ENCODE measurements at regions of chr13 and their contacts with region 1.

Region 1: GRCh38 chr13:99935777-99936176 is 35.8 kb downstream of the ZIC5 start:
- DNase-seq: peak in 1 of 2 experiments; percentile 60
- H3K4me3 ChIP-seq: no peak overlapping the region
- H3K27ac ChIP-seq: no peak overlapping the region
- H3K4me1 ChIP-seq: peaks cover 0 to 4% (median 2%) of the 10 kb centered on the region in 4 experiments; a peak in 3 of 7 replicates
- H3K27me3 ChIP-seq: no peaks in the 10 kb centered on the region
- CTCF ChIP-seq: peak; percentile 34 to 71 (median 52); a peak in 3 of 4 replicates
- EP300 ChIP-seq: no peak
- POLR2A ChIP-seq: no peak
- RAD21 ChIP-seq: peak; percentile 21 to 49; a peak in 2 of 4 replicates

Region 2: GRCh38 chr13:99830931-99831330 is 104.8 kb before region 1 on chr13:
- CTCF ChIA-PET with region 1: no interaction called
- POLR2A ChIA-PET with region 1: no interaction called
- DNase-seq: peak in 1 of 2 experiments; percentile 25
- H3K4me3 ChIP-seq: no peak overlapping the region
- H3K27ac ChIP-seq: no peak overlapping the region
- H3K4me1 ChIP-seq: peaks cover 0 to 4% (median 0%) of the 10 kb centered on the region in 4 experiments; a peak in 3 of 7 replicates
- H3K27me3 ChIP-seq: no peaks in the 10 kb centered on the region
- CTCF ChIP-seq: peak; percentile 49 to 86 (median 68)
- EP300 ChIP-seq: no peak
- POLR2A ChIP-seq: no peak
- RAD21 ChIP-seq: peak; percentile 59 to 72

Region 3: DNA sequence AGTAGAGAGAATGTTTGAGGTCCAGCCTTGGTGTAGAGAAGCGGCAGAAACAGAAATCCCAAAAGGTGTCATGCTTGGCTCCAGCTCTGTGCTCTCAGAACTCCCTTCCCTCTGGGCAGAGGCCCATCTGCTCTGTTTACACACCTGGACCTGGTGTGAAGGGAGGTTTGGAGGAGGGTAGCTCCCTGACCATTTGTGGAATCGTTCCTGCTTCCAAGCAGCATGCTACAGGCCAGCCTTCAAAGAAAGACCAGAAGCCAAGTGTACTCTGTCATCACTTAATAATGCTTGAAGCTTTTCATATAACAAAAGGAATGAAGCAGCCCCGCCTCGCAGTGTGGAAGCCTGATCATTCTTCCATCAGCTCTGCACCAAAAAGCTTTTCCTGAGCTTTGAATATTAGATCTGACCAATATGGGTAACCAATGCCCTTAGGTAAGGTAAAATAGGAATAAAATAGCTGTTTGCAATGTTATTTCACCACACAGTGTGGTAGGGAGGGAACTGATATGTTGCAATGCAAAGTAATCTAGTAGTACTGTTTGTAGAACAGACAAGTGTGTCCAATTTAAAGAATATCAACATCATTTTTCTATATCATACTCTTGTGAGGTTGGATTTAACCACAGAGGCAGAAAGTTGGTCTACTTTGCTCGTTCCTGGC is 27.5 kb before region 1 on chr13:
- CTCF ChIA-PET with region 1: interaction called, 12 read pairs
- POLR2A ChIA-PET with region 1: no interaction called
- DNase-seq: no peak
- H3K4me3 ChIP-seq: no peak overlapping the region
- H3K27ac ChIP-seq: no peak overlapping the region
- H3K4me1 ChIP-seq: peaks cover 1 to 9% (median 3%) of the 10 kb centered on the region in 4 experiments; a peak in 4 of 7 replicates
- H3K27me3 ChIP-seq: no peaks in the 10 kb centered on the region; a peak in 1 of 7 replicates
- CTCF ChIP-seq: no peak
- EP300 ChIP-seq: no peak
- POLR2A ChIP-seq: no peak
- RAD21 ChIP-seq: no peak

Region 4: DNA sequence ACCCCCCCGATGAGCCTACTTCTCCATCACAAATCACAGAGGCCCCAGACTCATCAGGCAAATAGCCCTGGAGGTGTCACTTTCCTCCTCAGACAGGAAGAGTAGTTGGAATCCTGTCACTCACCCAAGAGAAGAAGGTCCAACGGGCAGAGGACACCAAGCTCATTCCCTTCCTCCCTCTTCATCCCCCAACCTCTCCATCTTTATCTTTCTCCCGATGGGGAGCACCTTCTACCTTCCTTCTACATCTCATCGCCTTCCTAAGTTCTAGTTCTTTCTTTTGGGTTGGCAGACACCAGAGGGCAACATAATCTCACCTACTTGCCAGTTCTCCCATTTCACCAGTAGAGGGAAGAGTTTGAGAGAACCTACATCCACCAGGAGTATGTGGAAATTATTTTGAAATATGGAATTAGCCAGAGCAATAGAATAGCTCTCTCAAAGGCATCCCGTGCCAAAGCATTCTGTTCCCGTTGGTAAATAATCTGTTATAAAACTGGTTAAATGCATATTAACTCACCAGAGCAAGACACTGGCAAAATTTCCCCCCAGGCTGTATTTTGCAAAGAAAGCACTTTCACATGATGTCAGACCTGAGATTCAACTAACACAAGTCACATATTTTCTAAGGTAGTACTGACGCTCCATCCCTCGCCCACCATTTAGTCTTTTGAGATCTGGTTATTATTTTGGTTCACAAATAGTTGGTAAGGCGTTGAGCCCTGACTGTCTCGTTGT is 19.2 kb before region 1 on chr13:
- CTCF ChIA-PET with region 1: interaction called, 27 read pairs
- POLR2A ChIA-PET with region 1: interaction called, 3 read pairs
- DNase-seq: no peak
- H3K4me3 ChIP-seq: no peak overlapping the region
- H3K27ac ChIP-seq: no peak overlapping the region
- H3K4me1 ChIP-seq: peaks cover 1 to 4% (median 2%) of the 10 kb centered on the region in 4 experiments; a peak in 5 of 7 replicates
- H3K27me3 ChIP-seq: no peaks in the 10 kb centered on the region
- CTCF ChIP-seq: peak in 2 of 3 experiments; percentile 96 to 100; a peak in 3 of 4 replicates
- EP300 ChIP-seq: no peak
- POLR2A ChIP-seq: no peak
- RAD21 ChIP-seq: peak; percentile 80 to 86

Region 5: GRCh38 chr13:99949679-99950413 is 14.1 kb after region 1 on chr13:
- CTCF ChIA-PET with region 1: interaction called, 10 read pairs
- POLR2A ChIA-PET with region 1: interaction called, 3 read pairs
- DNase-seq: no peak
- H3K4me3 ChIP-seq: no peak overlapping the region
- H3K27ac ChIP-seq: no peak overlapping the region
- H3K4me1 ChIP-seq: peaks cover 1 to 5% (median 2%) of the 10 kb centered on the region in 4 experiments; a peak in 4 of 7 replicates
- H3K27me3 ChIP-seq: peaks cover 0 to 7% (median 3%) of the 10 kb centered on the region in 4 experiments; a peak in 5 of 7 replicates
- CTCF ChIP-seq: no peak
- EP300 ChIP-seq: no peak
- POLR2A ChIP-seq: no peak
- RAD21 ChIP-seq: no peak

Measured in H1 (cell line).